SK-N-SH (cell line): ENCODE measurements at regions of chr9 and their contacts with region 1.

Region 1: DNA sequence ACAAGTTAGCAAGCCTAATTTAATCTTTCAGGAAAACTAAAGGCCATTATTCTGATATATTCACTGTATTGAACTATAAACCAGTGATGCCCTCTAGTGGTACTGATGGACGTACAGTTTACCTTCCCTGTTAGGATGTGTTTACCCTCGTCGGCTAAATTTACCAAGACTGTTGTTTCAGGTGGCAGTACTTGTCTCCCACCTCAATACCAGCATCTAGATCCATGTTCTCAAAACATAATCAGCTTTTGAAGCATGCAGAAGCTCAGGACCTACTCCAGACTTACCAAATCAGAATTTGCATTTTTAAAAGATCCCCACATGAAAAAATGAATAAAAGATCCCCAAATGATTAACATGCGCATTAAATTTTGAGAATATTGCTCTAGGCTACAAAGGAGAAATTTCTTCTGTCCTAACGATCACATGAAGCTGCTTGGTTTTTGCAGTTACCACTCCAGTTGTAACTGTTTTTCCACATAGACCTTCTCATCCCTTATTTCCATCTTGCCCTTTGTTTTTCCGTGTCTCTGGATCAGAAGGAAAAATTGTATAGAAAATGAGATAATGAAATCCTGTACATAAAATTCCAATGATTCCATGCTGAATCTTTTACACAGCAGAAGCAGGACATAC is 3.2 kb upstream of the BAAT start:
- DNase-seq: peak; percentile 17
- H3K4me3 ChIP-seq: no peak overlapping the region
- H3K27ac ChIP-seq: no peak overlapping the region; a peak in 1 of 4 replicates
- H3K4me1 ChIP-seq: no peaks in the 10 kb centered on the region; a peak in 1 of 4 replicates
- H3K27me3 ChIP-seq: no peaks in the 10 kb centered on the region
- CTCF ChIP-seq: peak; percentile 79
- EP300 ChIP-seq: no peak
- RAD21 ChIP-seq: peak; percentile 30; the same call in 1 of the 2 replicates

Region 2: DNA sequence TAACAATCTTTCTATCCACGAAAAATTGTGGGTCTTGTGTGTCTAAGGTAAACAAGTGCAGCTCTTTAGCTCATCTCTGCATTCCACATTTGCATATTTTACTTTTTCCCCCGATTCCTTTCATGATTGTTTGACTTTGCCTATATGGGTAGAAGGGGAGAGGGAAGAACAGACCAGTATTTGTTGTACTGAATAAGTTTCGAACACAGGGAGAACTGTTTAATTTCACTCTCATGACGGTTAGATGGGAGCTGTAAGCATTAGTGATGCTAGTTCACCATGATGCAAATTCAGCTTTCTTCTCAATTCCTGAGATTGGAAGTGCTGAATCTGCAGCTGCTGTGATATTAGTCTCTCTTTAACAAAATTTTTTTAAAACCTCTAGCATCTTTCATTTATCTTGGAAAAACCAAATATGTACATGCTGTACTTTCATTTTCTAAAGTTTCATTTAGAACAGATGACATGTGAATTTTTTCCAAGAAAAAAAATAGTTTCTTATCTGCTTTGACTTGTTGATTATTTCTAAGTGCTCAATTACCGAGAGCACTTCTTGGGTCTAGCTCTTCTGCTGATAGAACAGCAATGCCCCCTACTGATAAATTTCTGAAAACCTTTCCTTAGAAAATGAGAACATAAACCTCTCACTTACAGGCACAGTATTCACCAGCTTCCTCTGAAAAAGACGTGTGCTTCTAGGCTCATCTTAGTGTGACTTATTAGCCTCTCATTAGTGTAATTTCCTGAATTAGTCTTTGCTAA is 152.7 kb before region 1 on chr9:
- CTCF ChIA-PET with region 1: no interaction called
- POLR2A ChIA-PET with region 1: no interaction called
- DNase-seq: peak; percentile 2
- H3K4me3 ChIP-seq: peak overlapping the region in 1 of 2 experiments; percentile 51; a peak in 1 of 4 replicates
- H3K27ac ChIP-seq: no peak overlapping the region
- H3K4me1 ChIP-seq: no peaks in the 10 kb centered on the region
- H3K27me3 ChIP-seq: no peaks in the 10 kb centered on the region
- CTCF ChIP-seq: peak; percentile 64
- EP300 ChIP-seq: no peak
- RAD21 ChIP-seq: peak; percentile 69

Region 3: DNA sequence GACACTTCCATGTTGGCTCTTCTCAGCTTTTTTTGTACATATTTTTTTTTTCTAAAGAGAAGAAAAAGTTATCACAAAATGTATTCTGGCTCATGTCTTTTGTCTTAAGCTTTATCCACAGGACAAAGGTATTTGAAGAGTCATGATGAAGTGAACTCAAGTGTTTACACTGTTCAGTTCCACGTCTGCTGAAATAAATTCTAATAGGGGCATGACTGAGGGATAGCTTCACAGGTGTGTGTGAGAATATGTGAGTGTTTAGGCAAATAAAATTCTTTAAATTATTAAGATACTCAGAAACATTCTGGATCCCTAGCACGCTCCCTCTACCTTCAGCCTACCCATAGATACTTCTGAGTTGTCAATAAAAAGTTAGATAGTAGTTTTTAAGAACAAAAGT is 62.9 kb before region 1 on chr9:
- CTCF ChIA-PET with region 1: no interaction called
- POLR2A ChIA-PET with region 1: no interaction called
- DNase-seq: no peak
- H3K4me3 ChIP-seq: no peak overlapping the region
- H3K27ac ChIP-seq: no peak overlapping the region
- H3K4me1 ChIP-seq: no peaks in the 10 kb centered on the region
- H3K27me3 ChIP-seq: no peaks in the 10 kb centered on the region
- CTCF ChIP-seq: no peak
- EP300 ChIP-seq: no peak
- RAD21 ChIP-seq: no peak

Region 4: DNA sequence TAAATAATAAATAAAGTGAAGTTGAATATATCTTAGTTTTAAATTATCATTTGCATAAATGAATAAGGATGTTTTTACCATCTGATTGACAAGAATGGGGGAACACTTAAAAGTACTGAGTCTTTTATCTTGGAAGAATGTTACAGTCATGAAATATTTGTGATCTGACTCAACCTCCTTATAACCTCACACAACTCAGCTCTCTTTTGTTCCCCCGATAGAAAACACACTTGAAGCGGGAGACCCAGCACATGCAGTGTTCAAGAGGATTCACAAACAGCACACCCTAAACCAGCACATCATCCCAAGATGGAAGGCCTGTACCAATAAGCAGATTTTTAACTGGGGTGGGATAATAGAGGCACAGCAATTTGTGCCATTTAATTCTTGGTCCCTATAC is 18.7 kb before region 1 on chr9:
- CTCF ChIA-PET with region 1: interaction called, 19 read pairs
- POLR2A ChIA-PET with region 1: no interaction called
- DNase-seq: no peak
- H3K4me3 ChIP-seq: no peak overlapping the region
- H3K27ac ChIP-seq: no peak overlapping the region; a peak in 1 of 4 replicates
- H3K4me1 ChIP-seq: peaks cover 0 to 6% of the 10 kb centered on the region in 2 experiments; a peak in 1 of 4 replicates
- H3K27me3 ChIP-seq: no peaks in the 10 kb centered on the region
- CTCF ChIP-seq: no peak
- EP300 ChIP-seq: no peak
- RAD21 ChIP-seq: no peak

Region 5: GRCh38 chr9:101398068-101398929 is 10.3 kb after region 1 on chr9 and contains the starts of genes MRPL50 and ZNF189:
- CTCF ChIA-PET with region 1: interaction called, 15 read pairs
- POLR2A ChIA-PET with region 1: interaction called, 4 read pairs
- DNase-seq: peak; percentile 86
- H3K4me3 ChIP-seq: peak within 1 kb of the TSS; percentile 79 to 88
- H3K27ac ChIP-seq: peak within 1 kb of the TSS; percentile 74 to 78
- H3K4me1 ChIP-seq: peaks cover 7% of the 10 kb centered on the region in 2 experiments; a peak in 2 of 4 replicates
- H3K27me3 ChIP-seq: no peaks in the 10 kb centered on the region
- CTCF ChIP-seq: no peak
- EP300 ChIP-seq: no peak
- RAD21 ChIP-seq: no peak
- polyA plus RNA-seq, gene MRPL50: 6.3 and 8.6 TPM in 2 replicates
- polyA plus RNA-seq, gene ZNF189: 2.9 and 3.4 TPM in 2 replicates

Region 6: DNA sequence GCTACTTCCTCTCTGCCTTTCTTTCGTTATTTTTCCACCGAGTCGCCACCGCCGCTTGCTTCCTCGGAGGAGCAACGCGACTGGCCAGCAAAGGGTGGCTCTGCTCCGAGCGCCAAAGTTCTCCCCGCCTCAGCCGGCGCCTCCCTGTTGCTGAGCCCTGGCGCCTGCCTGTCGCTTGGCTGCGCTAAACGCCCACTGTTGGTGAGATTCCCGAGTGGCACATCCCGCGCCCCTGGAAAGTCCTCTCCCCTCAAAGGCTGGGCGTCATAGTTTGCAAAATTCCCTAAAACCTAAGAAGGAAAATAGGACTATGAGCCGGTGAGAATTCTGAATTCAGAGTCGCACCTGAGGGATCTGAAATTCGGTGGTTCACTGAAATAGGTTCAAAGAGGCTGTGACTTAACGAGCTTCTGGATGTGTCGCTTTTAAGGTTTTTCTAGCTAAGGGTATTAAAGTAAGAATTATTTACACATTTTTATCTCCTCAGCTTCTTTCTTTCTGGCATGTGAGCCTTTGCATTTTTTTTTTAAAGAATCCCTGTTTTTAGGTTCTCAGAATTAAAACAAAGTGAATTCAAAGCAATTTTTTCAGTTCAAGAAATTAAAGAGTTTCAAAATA is 350.7 kb after region 1 on chr9 and contains the start of gene GRIN3A:
- CTCF ChIA-PET with region 1: no interaction called
- POLR2A ChIA-PET with region 1: no interaction called
- DNase-seq: peak; percentile 39
- H3K4me3 ChIP-seq: peak within 1 kb of the TSS in 1 of 2 experiments; percentile 21; a peak in 2 of 4 replicates
- H3K27ac ChIP-seq: no peak within 1 kb of the TSS
- H3K4me1 ChIP-seq: no peaks in the 10 kb centered on the region; a peak in 1 of 4 replicates
- H3K27me3 ChIP-seq: peaks cover 26% of the 10 kb centered on the region; the same call in 1 of the 2 replicates
- CTCF ChIP-seq: no peak
- EP300 ChIP-seq: no peak
- RAD21 ChIP-seq: 0 out of 2 replicates have a peak, but pooled peaks have one; percentile 20
- polyA plus RNA-seq, gene GRIN3A: not detected in 2 replicates